ENCODE measurements at regions of chr3 and their contacts with region 1.

Region 1: GRCh38 chr3:120417272-120417911 is 33.4 kb downstream of the FSTL1 start:
- DNase-seq: peak; percentile 96
- H3K4me3 Mint-ChIP-seq: peak overlapping the region; percentile 74
- H3K27ac Mint-ChIP-seq: peak overlapping the region; percentile 32
- H3K4me1 Mint-ChIP-seq: peaks cover 8% of the 10 kb centered on the region
- H3K27me3 Mint-ChIP-seq: no peaks in the 10 kb centered on the region

Region 2: GRCh38 chr3:119702530-119703157 is 714.7 kb before region 1 on chr3 and contains the start of gene CFAP91:
- CTCF ChIA-PET with region 1: no interaction called
- intact Hi-C with region 1: loop called (anchors 1 kb)
- DNase-seq: peak; percentile 83
- H3K4me3 Mint-ChIP-seq: peak within 1 kb of the TSS; percentile 72
- H3K27ac Mint-ChIP-seq: no peak within 1 kb of the TSS
- H3K4me1 Mint-ChIP-seq: peaks cover 45% of the 10 kb centered on the region
- H3K27me3 Mint-ChIP-seq: peaks cover 2% of the 10 kb centered on the region
- total RNA-seq, gene CFAP91: 0.26 to 0.57 TPM

Region 3: GRCh38 chr3:119891944-119892721 is 525.3 kb before region 1 on chr3:
- CTCF ChIA-PET with region 1: interaction called, 6 read pairs
- intact Hi-C with region 1: loop called (anchors 1 kb)
- DNase-seq: peak; percentile 59
- H3K4me3 Mint-ChIP-seq: no peak overlapping the region
- H3K27ac Mint-ChIP-seq: no peak overlapping the region
- H3K4me1 Mint-ChIP-seq: peaks cover 17% of the 10 kb centered on the region
- H3K27me3 Mint-ChIP-seq: no peaks in the 10 kb centered on the region

Region 4: DNA sequence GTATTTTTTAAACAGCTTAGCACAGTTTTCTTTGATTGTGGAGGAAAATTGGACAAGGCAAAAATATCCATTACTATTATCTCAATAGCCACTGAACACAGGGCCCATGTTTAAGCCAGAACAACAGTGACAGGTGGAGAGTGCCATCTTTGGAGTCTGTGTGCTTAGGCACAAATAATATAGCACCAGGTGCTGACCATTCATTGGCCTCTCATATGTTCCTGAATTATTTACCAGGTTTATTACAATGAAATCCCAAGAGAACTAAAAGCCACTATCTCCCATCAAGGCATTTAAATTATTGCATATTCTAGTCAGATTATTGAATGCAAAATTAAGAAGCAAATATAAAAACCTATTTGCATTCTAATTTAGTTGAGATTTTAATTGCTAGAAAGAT is 172.0 kb before region 1 on chr3:
- CTCF ChIA-PET with region 1: interaction called, 141 read pairs
- intact Hi-C with region 1: loop called (anchors 1 kb)
- DNase-seq: no peak
- H3K4me3 Mint-ChIP-seq: no peak overlapping the region
- H3K27ac Mint-ChIP-seq: no peak overlapping the region
- H3K4me1 Mint-ChIP-seq: no peaks in the 10 kb centered on the region
- H3K27me3 Mint-ChIP-seq: peaks cover 5% of the 10 kb centered on the region

Region 5: DNA sequence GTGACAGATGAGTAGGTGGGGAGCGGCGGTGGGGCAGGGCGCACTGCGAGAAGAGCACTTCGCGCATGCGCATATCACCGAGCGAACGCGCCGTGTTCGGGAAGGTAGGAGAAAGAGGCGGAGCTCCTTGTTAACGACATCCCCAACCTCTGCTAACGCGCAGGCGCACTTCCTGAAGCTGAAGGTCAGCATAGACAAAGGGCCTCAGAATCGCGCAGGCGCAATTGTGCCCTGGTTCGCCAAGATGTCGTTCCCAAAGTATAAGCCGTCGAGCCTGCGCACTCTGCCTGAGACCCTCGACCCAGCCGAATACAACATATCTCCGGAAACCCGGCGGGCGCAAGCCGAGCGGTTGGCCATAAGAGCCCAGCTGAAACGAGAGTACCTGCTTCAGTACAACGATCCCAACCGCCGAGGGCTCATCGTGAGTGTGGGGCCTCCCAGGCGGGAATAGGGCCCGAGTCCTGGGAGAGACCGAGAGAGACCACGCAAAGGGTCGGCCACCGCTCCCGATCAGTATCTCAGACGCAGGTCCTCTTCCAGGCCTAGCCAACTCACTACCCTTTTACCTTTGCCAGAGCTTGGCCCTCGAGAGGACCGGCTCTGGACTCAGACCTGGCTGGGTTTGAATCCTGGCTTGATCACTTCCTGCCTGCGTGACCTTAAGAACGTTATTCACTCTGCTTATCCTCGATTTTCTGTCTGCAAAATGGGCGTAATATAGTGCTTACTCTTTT is 178.9 kb after region 1 on chr3 and contains the start of gene NDUFB4:
- CTCF ChIA-PET with region 1: interaction called, 3 read pairs
- intact Hi-C with region 1: loop called (anchors 1 kb)
- DNase-seq: peak; percentile 97
- H3K4me3 Mint-ChIP-seq: peak within 1 kb of the TSS; percentile 86
- H3K27ac Mint-ChIP-seq: peak within 1 kb of the TSS; percentile 95
- H3K4me1 Mint-ChIP-seq: peaks cover 7% of the 10 kb centered on the region
- H3K27me3 Mint-ChIP-seq: no peaks in the 10 kb centered on the region
- total RNA-seq, gene NDUFB4: 146 to 152 TPM

Region 6: DNA sequence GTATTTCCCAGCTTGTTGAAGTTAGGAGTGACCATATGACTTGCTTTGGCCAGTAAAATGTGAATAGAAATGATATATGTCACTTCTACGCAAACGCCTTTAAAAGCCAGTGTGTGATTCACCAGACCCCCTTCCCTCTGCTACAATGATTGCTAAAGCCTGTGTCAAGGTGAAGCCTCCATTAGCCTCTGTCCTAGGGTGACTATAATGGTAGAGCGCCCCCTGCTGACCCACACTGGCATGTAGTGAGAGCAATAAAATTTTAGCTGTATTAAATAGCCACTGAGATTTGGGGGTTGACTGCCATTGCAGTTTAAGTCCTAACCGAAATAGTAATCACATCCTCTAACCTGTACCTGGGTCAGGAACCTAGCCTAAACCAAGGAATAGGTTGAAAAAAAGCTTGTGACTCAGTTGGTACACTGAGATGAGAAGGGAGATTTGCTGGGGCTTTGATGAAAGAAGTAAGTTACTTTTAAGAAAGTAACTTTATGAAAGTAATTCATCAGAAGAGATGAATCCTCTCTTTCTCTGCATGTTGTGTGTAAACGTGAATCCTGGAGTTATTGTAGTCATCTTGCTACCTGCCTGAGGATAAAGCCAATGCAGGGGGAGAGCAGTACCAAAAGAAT is 377.7 kb after region 1 on chr3:
- CTCF ChIA-PET with region 1: interaction called, 4 read pairs
- intact Hi-C with region 1: loop called (anchors 1 kb)
- DNase-seq: peak; percentile 93
- H3K4me3 Mint-ChIP-seq: no peak overlapping the region
- H3K27ac Mint-ChIP-seq: no peak overlapping the region
- H3K4me1 Mint-ChIP-seq: peaks cover 11% of the 10 kb centered on the region
- H3K27me3 Mint-ChIP-seq: peaks cover 3% of the 10 kb centered on the region

Measured in activated naive CD4-positive, alpha-beta T cell treated with anti-CD3 and anti-CD28 coated beads for 36 hours (primary cell).